Dendritic cell treated with granulocyte-macrophage colony-stimulating factor and Interleukin-4, amounts not matched to agents 40 ng/mL and 50 ng/mL, for 4 days (primary cell): ENCODE measurements at regions of chr20 and their contacts with region 1.

Region 1: GRCh38 chr20:47150403-47151152 is 205.9 kb downstream of the ZMYND8 start:
- H3K4me3 Mint-ChIP-seq: no peak overlapping the region
- H3K27ac Mint-ChIP-seq: peak overlapping the region; percentile 20
- H3K4me1 Mint-ChIP-seq: peaks cover 18% of the 10 kb centered on the region
- H3K27me3 Mint-ChIP-seq: peaks cover 15% of the 10 kb centered on the region

Region 2: DNA sequence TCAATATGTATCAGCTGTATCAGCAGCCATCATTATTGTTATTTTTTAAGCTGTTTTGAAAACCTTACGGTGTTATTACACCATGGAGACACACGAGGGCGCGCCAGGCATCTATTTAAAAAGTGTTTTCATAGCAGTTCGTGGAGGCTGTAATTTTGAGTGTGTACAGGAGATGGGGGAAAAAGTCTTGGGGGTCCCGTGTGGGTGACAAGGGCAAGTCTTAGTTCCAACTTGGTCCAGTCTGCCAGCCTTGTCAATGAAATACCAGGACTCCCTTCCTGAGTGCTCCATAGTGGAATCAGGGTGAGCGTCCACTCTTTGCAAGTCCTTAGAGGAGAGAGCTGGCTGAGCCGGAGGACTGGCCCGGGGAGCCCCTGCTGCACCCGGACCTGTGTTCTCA is 397.9 kb before region 1 on chr20:
- intact Hi-C with region 1: loop called (anchors 2 kb)
- H3K4me3 Mint-ChIP-seq: no peak overlapping the region
- H3K27ac Mint-ChIP-seq: no peak overlapping the region
- H3K4me1 Mint-ChIP-seq: no peaks in the 10 kb centered on the region
- H3K27me3 Mint-ChIP-seq: peaks cover 19% of the 10 kb centered on the region

Region 3: DNA sequence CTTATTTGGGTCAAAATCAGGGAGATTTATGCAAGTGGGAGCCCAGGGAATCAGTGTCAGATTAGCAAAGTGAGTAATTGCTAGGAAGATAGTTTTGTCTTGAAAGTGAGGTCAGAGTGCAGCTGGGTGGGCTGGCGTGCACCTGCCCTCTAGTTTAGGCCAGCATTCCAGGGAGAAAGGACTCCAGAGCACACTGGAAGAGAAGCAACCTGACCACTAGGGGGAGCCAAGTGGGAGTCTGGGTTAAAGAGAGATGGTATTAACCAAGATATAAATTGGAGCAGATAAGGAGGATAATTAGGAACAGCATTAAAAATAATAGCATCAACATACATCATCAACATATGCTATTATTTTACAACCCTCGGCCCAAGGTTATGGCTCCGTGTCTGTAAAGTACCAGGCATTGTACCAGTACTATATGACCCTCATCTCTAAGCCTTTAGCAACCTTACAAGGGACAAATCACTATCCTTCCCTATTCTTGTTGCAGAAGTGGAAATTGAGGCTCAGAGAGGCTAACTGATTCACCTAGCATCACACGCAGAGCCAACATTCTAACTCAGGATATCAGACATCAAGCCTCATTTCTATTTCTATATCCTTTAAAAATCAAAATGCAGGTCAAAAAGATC is 383.3 kb before region 1 on chr20:
- intact Hi-C with region 1: loop called (anchors 1 kb)
- H3K4me3 Mint-ChIP-seq: no peak overlapping the region
- H3K27ac Mint-ChIP-seq: no peak overlapping the region
- H3K4me1 Mint-ChIP-seq: no peaks in the 10 kb centered on the region
- H3K27me3 Mint-ChIP-seq: peaks cover 15% of the 10 kb centered on the region